ENCODE measurements at regions of chr4 and their contacts with region 1.

Region 1: GRCh38 chr4:77203380-77204197 is 46.6 kb downstream of the CCNG2 start:
- DNase-seq: peak; percentile 61
- H3K4me3 ChIP-seq: no peak overlapping the region
- H3K27ac ChIP-seq: no peak overlapping the region
- H3K27me3 ChIP-seq: peaks cover 16% of the 10 kb centered on the region
- CTCF ChIP-seq: peak; percentile 82

Region 2: GRCh38 chr4:76430519-76431388 is 772.8 kb before region 1 on chr4:
- CTCF ChIA-PET with region 1: interaction called, 45 read pairs
- POLR2A ChIA-PET with region 1: no interaction called
- DNase-seq: peak; percentile 7
- H3K4me3 ChIP-seq: no peak overlapping the region
- H3K27ac ChIP-seq: no peak overlapping the region
- H3K27me3 ChIP-seq: peaks cover 15% of the 10 kb centered on the region
- CTCF ChIP-seq: peak; percentile 73

Region 3: GRCh38 chr4:76963133-76963750 is 240.3 kb before region 1 on chr4:
- CTCF ChIA-PET with region 1: no interaction called
- POLR2A ChIA-PET with region 1: no interaction called
- DNase-seq: no peak
- H3K4me3 ChIP-seq: no peak overlapping the region
- H3K27ac ChIP-seq: no peak overlapping the region
- H3K27me3 ChIP-seq: no peaks in the 10 kb centered on the region
- CTCF ChIP-seq: no peak

Region 4: DNA sequence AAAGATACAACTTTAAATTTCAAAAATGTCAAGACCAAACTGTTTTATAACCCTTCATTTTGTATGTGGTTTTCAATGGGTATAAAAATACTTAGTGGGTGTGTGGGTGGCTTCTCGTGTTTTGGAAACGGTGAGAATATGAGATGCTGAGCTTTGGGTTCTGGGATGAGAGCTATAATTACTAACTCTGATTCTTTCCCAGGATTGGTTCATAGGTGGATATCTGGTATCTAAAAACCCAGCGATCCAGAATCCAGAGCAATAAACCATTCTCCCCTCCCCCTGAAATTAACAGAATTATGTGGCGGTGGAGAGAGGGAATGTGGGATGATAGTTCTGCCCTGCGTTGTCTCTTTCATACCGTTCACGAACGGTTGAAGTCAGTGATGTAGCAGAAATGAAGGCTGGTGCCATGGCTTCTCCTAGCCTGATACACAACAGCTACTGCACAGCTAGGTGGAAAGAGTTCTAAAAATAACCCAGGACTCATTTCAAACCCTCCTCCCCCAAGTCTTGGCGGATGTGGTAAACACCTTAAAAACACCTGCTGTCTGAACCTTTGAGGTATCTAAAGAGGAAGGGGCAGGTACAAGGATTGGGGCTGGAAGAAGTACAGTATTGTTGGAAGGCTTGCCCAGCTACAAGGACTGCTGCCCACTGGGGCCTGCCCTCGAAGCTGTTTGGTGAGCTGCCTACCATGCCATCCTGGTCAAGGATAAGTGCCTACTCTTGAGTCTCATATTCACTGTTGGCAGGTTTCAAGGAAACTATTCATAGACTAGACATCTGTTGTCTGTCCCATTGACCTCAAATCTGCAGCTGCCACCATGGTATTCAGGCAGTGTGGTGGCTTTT is 209.6 kb before region 1 on chr4:
- CTCF ChIA-PET with region 1: interaction called, 11 read pairs
- POLR2A ChIA-PET with region 1: no interaction called
- DNase-seq: no peak
- H3K4me3 ChIP-seq: no peak overlapping the region
- H3K27ac ChIP-seq: no peak overlapping the region
- H3K27me3 ChIP-seq: no peaks in the 10 kb centered on the region
- CTCF ChIP-seq: no peak

Region 5: GRCh38 chr4:77075869-77076799 is 127.5 kb before region 1 on chr4 and contains the start of gene CCNI:
- CTCF ChIA-PET with region 1: interaction called, 33 read pairs
- POLR2A ChIA-PET with region 1: no interaction called
- DNase-seq: peak; percentile 96
- H3K4me3 ChIP-seq: peak within 1 kb of the TSS; percentile 82
- H3K27ac ChIP-seq: peak within 1 kb of the TSS; percentile 100
- H3K27me3 ChIP-seq: no peaks in the 10 kb centered on the region
- CTCF ChIP-seq: no peak
- polyA plus RNA-seq, gene CCNI: 178 and 226 TPM in 2 replicates

Region 6: DNA sequence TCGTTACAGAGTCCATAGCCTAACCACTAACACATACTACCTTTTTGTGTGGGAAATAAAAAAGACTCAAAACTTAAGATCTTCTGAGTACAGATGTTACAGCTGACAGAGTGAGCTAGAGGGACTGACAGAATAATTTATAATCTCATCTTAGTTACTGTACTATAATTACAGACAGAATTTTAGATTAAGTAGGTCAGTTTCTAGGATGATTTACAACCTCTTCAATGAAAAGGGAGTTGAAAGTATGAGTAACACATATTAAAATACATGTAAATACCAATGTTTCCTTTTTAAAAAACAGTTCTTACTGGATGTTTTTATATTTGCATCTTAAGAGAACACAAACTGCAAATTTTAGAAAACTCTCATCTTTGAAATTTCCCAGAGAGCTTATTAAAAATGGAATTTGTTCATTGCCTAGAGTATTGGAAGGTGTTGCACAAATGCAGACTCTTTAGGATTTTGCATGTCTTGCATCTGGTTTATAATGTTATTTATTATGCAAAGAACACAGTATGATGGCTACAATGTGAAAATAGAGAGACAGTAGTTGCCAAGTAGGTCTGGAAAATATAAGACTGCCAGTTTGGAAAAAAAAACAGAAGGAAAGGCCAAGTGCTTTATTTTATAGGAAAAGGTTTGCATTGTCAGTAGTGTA is 70.8 kb before region 1 on chr4:
- CTCF ChIA-PET with region 1: interaction called, 14 read pairs
- POLR2A ChIA-PET with region 1: no interaction called
- DNase-seq: no peak
- H3K4me3 ChIP-seq: no peak overlapping the region
- H3K27ac ChIP-seq: no peak overlapping the region
- H3K27me3 ChIP-seq: peaks cover 5% of the 10 kb centered on the region
- CTCF ChIP-seq: no peak

Region 7: DNA sequence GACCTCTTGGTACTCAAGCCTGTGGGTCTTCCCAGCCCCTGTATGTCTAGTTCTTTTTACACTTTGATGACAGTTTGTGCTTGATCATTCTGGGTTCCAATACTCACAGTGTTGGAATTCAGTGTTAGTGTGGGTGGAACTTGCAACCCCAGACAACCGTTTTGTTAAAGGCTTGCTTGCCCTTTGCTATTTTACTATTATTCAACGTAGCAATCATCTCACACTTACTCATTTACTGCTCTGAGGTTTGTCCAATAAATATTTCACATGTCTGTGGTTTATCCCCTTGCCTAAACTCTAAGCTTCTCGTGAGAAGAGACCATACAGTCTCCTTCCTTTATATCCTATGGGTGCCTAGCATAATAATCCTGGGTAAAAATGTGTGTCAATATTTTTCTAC is 31.3 kb before region 1 on chr4:
- CTCF ChIA-PET with region 1: interaction called, 47 read pairs
- POLR2A ChIA-PET with region 1: no interaction called
- DNase-seq: peak; percentile 81
- H3K4me3 ChIP-seq: no peak overlapping the region
- H3K27ac ChIP-seq: no peak overlapping the region
- H3K27me3 ChIP-seq: peaks cover 14% of the 10 kb centered on the region
- CTCF ChIP-seq: no peak

Region 8: DNA sequence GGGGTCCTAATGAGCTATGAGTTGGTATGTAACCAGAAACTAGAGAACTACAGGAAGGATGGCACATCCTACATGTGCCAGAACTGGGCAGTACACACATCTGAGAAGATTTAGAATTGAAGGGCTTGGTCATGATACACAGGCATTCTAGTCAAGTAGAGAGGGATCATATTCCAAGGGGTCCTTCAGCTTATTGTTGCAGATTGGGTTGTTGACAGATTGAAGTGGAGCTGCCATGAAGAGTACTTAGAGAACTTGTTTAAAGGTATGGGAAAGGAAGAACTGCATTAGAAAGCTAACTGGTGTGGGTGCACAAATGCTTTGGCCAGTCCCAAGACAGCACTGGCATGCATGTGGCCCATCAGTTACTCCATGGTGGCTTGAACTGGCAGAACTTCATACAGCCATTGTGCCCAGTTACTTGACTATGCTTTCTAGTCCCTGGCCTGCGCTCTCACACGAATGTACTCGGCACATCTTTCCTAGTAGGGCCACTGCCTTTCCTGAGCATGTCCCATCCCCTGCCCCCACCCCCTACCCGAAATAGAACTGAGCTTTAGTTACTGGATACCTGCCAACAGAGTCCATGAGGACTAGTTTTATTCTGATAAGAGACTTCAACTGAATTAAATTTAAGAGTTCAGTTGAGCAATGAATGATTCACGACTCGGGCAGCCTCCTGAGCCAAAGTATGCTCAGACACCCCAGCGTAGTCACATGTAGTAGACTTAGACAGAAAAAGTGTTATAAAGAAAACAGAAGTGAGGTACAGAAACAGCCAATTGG is 17.4 kb after region 1 on chr4:
- CTCF ChIA-PET with region 1: interaction called, 18 read pairs
- POLR2A ChIA-PET with region 1: no interaction called
- DNase-seq: no peak
- H3K4me3 ChIP-seq: no peak overlapping the region
- H3K27ac ChIP-seq: no peak overlapping the region
- H3K27me3 ChIP-seq: peaks cover 16% of the 10 kb centered on the region
- CTCF ChIP-seq: no peak

Region 9: GRCh38 chr4:77745792-77746191 is 542.2 kb after region 1 on chr4:
- CTCF ChIA-PET with region 1: no interaction called
- POLR2A ChIA-PET with region 1: no interaction called
- DNase-seq: no peak
- H3K4me3 ChIP-seq: no peak overlapping the region
- H3K27ac ChIP-seq: no peak overlapping the region
- H3K27me3 ChIP-seq: no peaks in the 10 kb centered on the region
- CTCF ChIP-seq: no peak